CD4-positive, alpha-beta memory T cell (primary cell): ENCODE measurements at regions of chr14 and their contacts with region 1.

Region 1: DNA sequence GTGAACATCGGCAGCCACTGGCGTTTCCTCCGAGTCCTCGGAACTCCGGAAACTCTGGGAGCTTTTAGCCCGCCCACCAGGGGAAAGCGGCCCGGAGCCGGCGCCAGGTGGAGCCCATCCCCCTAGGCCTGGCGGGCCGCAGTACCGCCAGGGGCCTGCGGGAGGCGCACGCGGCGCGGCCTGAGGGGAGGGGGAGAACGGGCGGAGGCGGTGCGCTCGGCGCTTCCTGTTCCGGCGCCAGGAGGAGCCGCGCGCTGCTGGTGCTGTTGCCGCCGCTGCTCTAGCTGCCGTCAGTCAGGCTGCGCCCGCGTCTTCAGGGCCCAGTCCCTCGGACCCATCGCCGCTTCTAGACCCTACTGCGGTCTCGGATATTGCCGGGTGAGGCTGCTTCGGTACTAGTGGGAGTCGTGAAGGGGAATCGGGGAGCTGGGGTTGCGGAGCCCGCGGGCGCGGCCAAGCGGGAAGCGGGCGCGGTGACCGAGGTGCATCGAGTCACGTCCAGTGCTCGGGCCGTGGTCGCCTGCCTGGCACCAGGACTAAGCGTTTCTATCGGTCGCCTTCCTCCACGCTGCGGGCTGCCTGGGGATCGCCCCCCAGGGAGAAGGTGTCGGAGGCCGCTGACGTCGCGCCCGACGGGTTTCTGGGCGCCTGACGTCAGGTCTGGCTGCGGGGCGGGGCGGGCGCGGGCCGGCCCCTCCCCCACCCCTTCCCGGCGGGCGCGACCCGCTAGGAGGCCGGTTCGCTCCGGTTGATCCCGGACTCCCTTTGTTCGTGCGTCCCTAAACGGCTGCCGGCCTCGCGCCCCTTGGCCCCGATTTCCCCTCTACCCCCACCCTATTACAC is at the start of gene MAPK1IP1L:
- DNase-seq: peak; percentile 88 to 95 (median 91)
- H3K4me3 ChIP-seq: peak within 1 kb of the TSS; percentile 67 to 98
- H3K4me3 Mint-ChIP-seq: peak within 1 kb of the TSS; percentile 87 to 95 (median 92)
- H3K27ac ChIP-seq: peak within 1 kb of the TSS; percentile 100
- H3K27ac Mint-ChIP-seq: peak within 1 kb of the TSS; percentile 95 to 98 (median 96)
- H3K4me1 ChIP-seq: peaks cover 48% of the 10 kb centered on the region
- H3K4me1 Mint-ChIP-seq: peaks cover 27 to 55% (median 39%) of the 10 kb centered on the region in 4 donors
- H3K27me3 ChIP-seq: no peaks in the 10 kb centered on the region
- H3K27me3 Mint-ChIP-seq: no peaks in the 10 kb centered on the region
- total RNA-seq, gene MAPK1IP1L: 67.2 to 73.4 TPM

Region 2: GRCh38 chr14:55026793-55027561 is 24.7 kb before region 1 on chr14 and contains the starts of genes SOCS4 and WDHD1:
- CTCF ChIA-PET with region 1: interaction called, 24 read pairs
- POLR2A ChIA-PET with region 1: interaction called, 62 read pairs
- intact Hi-C with region 1: loop called (anchors 1 kb)
- DNase-seq: peak; percentile 96 to 98 (median 97)
- H3K4me3 ChIP-seq: peak within 1 kb of the TSS; percentile 70 to 87
- H3K4me3 Mint-ChIP-seq: peak within 1 kb of the TSS; percentile 87 to 95 (median 94)
- H3K27ac ChIP-seq: peak within 1 kb of the TSS; percentile 89
- H3K27ac Mint-ChIP-seq: peak within 1 kb of the TSS; percentile 87 to 98 (median 96)
- H3K4me1 ChIP-seq: peaks cover 47% of the 10 kb centered on the region
- H3K4me1 Mint-ChIP-seq: peaks cover 37 to 56% (median 44%) of the 10 kb centered on the region in 4 donors
- H3K27me3 ChIP-seq: no peaks in the 10 kb centered on the region
- H3K27me3 Mint-ChIP-seq: no peaks in the 10 kb centered on the region
- total RNA-seq, gene SOCS4: 19.2 to 24.5 TPM
- total RNA-seq, gene WDHD1: 4.0 to 4.1 TPM

Region 3: GRCh38 chr14:55062517-55063351 is 11.1 kb after region 1 on chr14:
- CTCF ChIA-PET with region 1: interaction called, 13 read pairs
- POLR2A ChIA-PET with region 1: interaction called, 13 read pairs
- intact Hi-C with region 1: no loop called
- DNase-seq: no peak
- H3K4me3 ChIP-seq: no peak overlapping the region
- H3K4me3 Mint-ChIP-seq: peak overlapping the region in 1 of 8 donors; percentile 17
- H3K27ac ChIP-seq: no peak overlapping the region
- H3K27ac Mint-ChIP-seq: peak overlapping the region in 4 of 7 donors; percentile 48 to 78 (median 69)
- H3K4me1 ChIP-seq: peaks cover 25% of the 10 kb centered on the region
- H3K4me1 Mint-ChIP-seq: peaks cover 20 to 47% (median 28%) of the 10 kb centered on the region in 4 donors
- H3K27me3 ChIP-seq: no peaks in the 10 kb centered on the region
- H3K27me3 Mint-ChIP-seq: no peaks in the 10 kb centered on the region

Region 4: DNA sequence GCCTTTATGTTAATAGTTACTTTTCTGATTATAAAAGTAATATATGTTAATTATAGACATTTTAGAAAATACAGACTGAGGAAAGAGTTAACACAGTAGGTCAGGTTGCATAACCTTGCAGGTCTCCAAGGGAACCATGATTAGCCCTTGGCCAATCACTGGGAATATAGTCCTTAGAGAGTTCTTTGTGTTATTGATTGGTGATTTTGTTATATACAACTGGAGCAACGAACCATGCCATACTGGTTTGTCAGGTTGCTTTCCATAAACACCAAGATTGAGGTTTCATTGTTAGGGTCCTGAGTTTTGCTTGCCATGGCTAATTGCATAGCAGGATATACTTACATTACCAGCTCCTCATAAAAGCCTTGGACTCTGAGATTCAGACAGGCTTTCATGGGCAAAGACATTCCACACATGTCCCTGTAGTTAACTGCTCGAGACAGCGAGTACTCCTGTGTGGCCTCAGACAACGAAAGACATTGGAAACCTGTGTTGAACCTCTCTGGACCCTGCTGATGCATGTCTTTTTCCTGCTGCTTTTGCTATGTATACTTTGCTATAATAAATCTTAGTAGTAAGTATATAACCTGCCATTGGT is 33.5 kb after region 1 on chr14:
- CTCF ChIA-PET with region 1: interaction called, 17 read pairs
- POLR2A ChIA-PET with region 1: interaction called, 3 read pairs
- intact Hi-C with region 1: loop called (anchors 1 kb)
- DNase-seq: no peak
- H3K4me3 ChIP-seq: no peak overlapping the region
- H3K4me3 Mint-ChIP-seq: no peak overlapping the region
- H3K27ac ChIP-seq: no peak overlapping the region
- H3K27ac Mint-ChIP-seq: no peak overlapping the region
- H3K4me1 ChIP-seq: peaks cover 3% of the 10 kb centered on the region
- H3K4me1 Mint-ChIP-seq: peaks cover 3% of the 10 kb centered on the region in 4 donors
- H3K27me3 ChIP-seq: no peaks in the 10 kb centered on the region
- H3K27me3 Mint-ChIP-seq: no peaks in the 10 kb centered on the region

Region 5: GRCh38 chr14:55102141-55102621 is 50.5 kb after region 1 on chr14:
- CTCF ChIA-PET with region 1: interaction called, 16 read pairs
- POLR2A ChIA-PET with region 1: interaction called, 17 read pairs
- intact Hi-C with region 1: loop called (anchors 2 kb)
- DNase-seq: peak; percentile 53 to 77 (median 55)
- H3K4me3 ChIP-seq: peak overlapping the region in 1 of 2 donors; percentile 26
- H3K4me3 Mint-ChIP-seq: peak overlapping the region in 7 of 8 donors; percentile 18 to 85 (median 67)
- H3K27ac ChIP-seq: peak overlapping the region; percentile 65
- H3K27ac Mint-ChIP-seq: peak overlapping the region; percentile 94 to 98 (median 97)
- H3K4me1 ChIP-seq: peaks cover 72% of the 10 kb centered on the region
- H3K4me1 Mint-ChIP-seq: peaks cover 41 to 72% (median 53%) of the 10 kb centered on the region in 4 donors
- H3K27me3 ChIP-seq: no peaks in the 10 kb centered on the region
- H3K27me3 Mint-ChIP-seq: no peaks in the 10 kb centered on the region

Region 6: DNA sequence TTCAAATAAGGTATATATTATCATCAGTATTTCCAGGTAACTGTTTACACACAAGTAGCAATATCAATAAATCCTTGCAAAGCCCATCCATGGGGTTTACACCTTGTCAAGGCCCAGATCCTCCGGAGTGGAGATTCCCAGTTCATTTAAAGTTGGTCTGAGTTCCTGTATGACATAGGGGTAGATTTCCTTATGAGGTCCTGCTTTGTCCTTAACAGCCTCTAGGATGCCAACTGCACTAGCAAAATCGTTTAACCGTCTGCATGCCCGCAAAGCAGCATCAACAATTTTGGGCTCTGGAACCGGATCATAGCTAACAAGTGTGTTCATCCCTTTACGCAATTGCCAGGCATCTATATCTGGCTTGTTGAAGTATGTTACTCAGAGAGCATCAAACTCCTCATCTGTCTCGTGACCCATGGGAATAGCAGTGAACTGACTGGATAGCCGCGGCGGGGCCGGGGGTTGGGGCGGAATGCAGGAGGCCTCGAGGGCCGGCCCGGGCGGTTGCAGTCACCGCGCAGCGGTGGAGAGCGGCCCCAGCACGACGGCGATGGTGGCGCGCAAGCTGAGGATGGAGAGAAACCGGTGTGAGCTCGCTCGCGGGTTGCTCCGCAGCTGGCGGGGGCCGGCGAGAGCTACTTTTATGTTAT is 189.0 kb after region 1 on chr14:
- CTCF ChIA-PET with region 1: no interaction called
- POLR2A ChIA-PET with region 1: no interaction called
- intact Hi-C with region 1: no loop called
- DNase-seq: no peak
- H3K4me3 ChIP-seq: no peak overlapping the region
- H3K4me3 Mint-ChIP-seq: no peak overlapping the region
- H3K27ac ChIP-seq: no peak overlapping the region
- H3K27ac Mint-ChIP-seq: no peak overlapping the region
- H3K4me1 ChIP-seq: no peaks in the 10 kb centered on the region
- H3K4me1 Mint-ChIP-seq: no peaks in the 10 kb centered on the region
- H3K27me3 ChIP-seq: no peaks in the 10 kb centered on the region
- H3K27me3 Mint-ChIP-seq: peaks cover 6 to 9% of the 10 kb centered on the region in 2 donors

Region 7: DNA sequence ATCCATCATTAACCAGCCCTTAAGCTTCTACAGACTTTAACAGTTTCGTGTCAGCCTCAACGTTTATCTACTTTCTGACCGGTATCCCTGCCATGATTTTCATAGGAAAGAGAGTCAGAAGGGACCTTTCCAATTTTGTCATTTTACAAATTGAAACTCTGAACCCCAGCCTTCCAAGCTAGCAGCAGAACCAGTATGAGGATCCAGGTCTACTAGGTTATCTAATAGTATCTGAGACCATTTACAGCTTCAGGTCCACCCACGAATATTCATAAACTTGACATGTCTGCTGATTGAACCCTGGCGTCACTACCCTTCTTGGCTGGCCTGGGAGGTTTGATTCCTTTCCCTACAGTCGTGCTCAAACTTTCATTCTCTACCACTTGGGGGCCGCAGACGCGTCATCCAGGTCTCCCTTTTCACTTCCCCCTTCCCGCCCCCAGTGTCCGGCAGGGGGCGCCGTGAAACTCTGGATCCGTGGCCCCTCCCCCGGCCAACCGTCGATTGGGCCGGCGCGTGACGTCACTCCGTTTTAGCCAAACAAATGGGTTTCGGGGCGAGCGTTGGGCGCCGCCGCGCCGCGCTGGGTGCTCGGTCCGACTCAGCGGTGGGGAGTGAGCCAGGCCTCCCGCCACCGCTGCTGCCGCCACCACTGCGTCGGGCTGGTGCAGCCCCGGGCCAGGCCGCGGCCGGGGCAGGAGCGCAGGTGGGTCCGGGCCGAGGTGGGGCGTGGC is 219.4 kb after region 1 on chr14 and contains the start of gene FBXO34:
- CTCF ChIA-PET with region 1: no interaction called
- POLR2A ChIA-PET with region 1: no interaction called
- intact Hi-C with region 1: loop called (anchors 1 kb)
- DNase-seq: peak; percentile 97 to 100 (median 98)
- H3K4me3 ChIP-seq: peak within 1 kb of the TSS; percentile 76 to 90
- H3K4me3 Mint-ChIP-seq: peak within 1 kb of the TSS; percentile 89 to 95 (median 92)
- H3K27ac ChIP-seq: peak within 1 kb of the TSS; percentile 91
- H3K27ac Mint-ChIP-seq: peak within 1 kb of the TSS; percentile 93 to 96 (median 95)
- H3K4me1 ChIP-seq: peaks cover 41% of the 10 kb centered on the region
- H3K4me1 Mint-ChIP-seq: peaks cover 31 to 48% (median 36%) of the 10 kb centered on the region in 4 donors
- H3K27me3 ChIP-seq: no peaks in the 10 kb centered on the region
- H3K27me3 Mint-ChIP-seq: no peaks in the 10 kb centered on the region
- total RNA-seq, gene FBXO34: 42.1 to 43.6 TPM